A673 (cell line): ENCODE measurements at regions of chr2 and their contacts with region 1.

Region 1: DNA sequence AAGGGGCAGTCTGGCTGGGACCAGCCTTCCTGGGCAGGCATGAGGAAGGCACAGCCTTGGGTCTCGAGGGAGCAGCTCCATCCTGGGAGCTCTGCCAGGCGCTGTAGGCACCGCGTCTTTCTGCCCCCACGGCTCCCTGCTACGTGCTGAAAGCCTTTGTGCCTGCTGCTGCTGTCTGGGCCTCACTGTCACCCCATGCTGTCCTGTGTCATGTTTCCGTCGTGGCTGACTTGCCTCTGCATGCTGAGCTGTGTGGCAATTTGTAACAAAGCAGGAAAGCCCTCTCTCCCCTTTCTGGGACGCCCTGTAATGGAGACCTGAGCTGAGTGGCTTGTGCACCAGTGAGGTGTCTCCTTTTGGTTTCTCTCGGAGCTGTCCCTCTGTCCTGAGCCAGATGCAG is 152.5 kb downstream of the TSN start:
- DNase-seq: peak; percentile 96
- H3K4me3 ChIP-seq: peak overlapping the region; percentile 19
- H3K27ac ChIP-seq: peak overlapping the region; percentile 83
- H3K4me1 ChIP-seq: peaks cover 27% of the 10 kb centered on the region
- H3K27me3 ChIP-seq: no peaks in the 10 kb centered on the region
- CTCF ChIP-seq: no peak

Region 2: GRCh38 chr2:121969166-121969565 is 61.2 kb after region 1 on chr2:
- CTCF ChIA-PET with region 1: no interaction called
- POLR2A ChIA-PET with region 1: no interaction called
- intact Hi-C with region 1: loop called (anchors 5 kb)
- DNase-seq: no peak
- H3K4me3 ChIP-seq: no peak overlapping the region
- H3K27ac ChIP-seq: peak overlapping the region; percentile 64
- H3K4me1 ChIP-seq: peaks cover 32% of the 10 kb centered on the region
- H3K27me3 ChIP-seq: no peaks in the 10 kb centered on the region
- CTCF ChIP-seq: no peak

Region 3: DNA sequence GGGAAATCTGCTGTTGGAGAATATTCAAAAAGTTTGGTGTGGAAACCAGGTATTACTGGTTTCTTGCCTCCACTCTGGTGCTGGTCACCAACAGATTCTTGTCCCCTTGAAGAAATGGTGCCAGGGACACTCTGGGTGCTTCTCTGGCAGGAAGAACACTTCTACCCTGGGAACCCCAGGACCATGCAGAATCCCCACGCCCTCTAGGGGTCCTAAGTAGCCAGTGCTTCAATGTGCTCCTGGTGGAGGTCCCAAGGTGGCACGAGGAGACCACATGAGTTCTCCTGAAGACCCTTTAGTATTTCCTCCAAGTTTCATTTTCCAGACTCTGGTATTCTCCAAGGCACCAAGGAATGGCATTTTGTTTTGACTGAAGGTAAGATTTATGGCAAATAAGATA is 228.1 kb after region 1 on chr2:
- CTCF ChIA-PET with region 1: no interaction called
- POLR2A ChIA-PET with region 1: no interaction called
- intact Hi-C with region 1: no loop called
- DNase-seq: peak; percentile 71
- H3K4me3 ChIP-seq: no peak overlapping the region
- H3K27ac ChIP-seq: no peak overlapping the region
- H3K4me1 ChIP-seq: peaks cover 5% of the 10 kb centered on the region
- H3K27me3 ChIP-seq: no peaks in the 10 kb centered on the region
- CTCF ChIP-seq: peak; percentile 76

Region 4: GRCh38 chr2:122681626-122682025 is 773.7 kb after region 1 on chr2:
- CTCF ChIA-PET with region 1: no interaction called
- POLR2A ChIA-PET with region 1: no interaction called
- intact Hi-C with region 1: no loop called
- DNase-seq: no peak
- H3K4me3 ChIP-seq: no peak overlapping the region
- H3K27ac ChIP-seq: no peak overlapping the region
- H3K4me1 ChIP-seq: peaks cover 14% of the 10 kb centered on the region
- H3K27me3 ChIP-seq: no peaks in the 10 kb centered on the region
- CTCF ChIP-seq: no peak